ENCODE measurements at regions of chr22 and their contacts with region 1.

Region 1: DNA sequence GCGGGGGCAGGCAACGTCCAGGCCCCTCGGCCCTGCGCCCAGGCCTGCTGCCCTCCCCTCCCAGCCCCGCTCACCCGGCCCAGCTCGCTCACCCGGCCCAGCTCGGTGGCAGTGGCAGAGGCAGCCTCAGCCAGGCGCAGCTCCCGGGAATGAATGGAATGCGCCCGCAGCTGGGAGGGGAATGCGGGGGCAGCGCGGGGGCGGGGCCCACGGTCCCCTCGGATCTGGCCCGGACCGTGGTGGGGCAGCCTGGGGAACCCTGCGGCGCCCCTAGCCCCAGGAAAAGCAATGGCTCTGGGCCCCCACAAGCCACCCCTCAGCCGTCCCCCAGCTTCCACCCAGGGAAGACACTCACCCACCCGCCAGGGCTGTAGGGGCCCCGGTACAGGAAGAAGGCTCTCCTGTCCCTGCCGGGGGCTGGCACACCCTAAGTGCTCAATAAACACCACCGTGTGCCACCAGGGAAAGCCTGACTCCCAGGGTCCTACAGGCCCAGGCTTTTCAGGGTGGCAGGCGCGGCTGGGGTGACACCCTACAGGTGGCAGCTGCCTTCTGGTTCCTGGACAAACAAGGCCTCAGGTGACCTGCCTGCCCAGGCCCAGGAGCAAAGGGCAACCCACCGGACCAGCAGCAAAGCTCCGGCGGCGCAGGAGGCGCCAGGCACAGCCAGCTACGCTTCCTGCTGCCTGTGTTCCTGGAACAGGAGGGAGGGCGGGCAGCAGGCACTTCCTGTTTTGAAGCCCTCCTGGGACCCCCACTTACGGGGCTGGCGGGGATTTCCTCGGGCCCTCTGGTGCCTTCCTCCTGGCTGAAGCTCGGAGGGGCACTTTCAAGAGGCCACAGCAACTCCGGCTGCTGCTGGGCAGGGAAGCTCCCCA is 13.8 kb downstream of the PLXNB2 start:
- DNase-seq: peak; percentile 83
- H3K4me3 ChIP-seq: peak overlapping the region in 2 of 3 experiments; percentile 6 to 22
- H3K27ac ChIP-seq: peak overlapping the region; percentile 92
- H3K4me1 ChIP-seq: peaks cover 20% of the 10 kb centered on the region
- H3K27me3 ChIP-seq: no peaks in the 10 kb centered on the region
- CTCF ChIP-seq: peak in 1 of 2 donors; percentile 1
- POLR2A ChIP-seq: peak; percentile 9

Region 2: DNA sequence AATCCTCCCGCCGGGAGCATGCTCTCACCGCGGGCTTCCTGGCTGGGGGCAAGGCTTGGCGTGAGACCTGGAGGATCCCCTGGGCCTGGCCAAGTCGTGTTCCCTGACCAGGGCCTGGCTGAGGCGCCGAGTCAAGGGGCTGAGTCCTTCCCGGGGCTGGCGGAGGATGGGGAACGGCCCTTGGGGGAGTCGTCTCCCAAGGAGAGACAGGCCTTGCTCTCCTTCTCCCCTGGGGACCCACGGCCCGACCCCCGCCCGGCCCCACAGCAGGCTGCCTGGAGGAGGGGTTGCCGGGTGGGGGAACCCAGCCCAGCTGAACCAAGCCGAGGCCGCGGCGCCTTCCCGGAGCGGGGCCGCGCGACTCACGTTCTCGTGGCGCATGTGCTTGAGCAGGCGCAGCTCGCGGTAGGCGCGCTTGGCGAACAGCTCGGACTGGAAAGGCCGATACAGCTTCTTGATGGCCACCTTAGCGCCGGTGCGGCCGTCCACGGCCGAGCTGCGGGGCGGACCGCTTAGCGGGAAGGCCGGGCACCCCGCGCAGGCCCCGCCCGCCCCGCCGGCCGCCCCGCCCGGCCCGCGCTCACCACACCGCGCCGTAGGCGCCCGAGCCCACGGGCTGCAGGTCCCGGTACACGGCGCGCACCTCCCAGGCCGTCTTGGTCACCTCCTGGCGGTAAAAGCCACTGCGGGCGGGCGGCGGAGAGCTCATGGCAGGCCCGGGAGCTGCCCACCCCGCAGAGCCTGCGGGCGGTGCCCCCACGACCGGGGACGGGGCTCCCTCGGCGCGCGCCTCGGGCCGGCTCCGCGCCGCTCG is 32.7 kb before region 1 on chr22:
- CTCF ChIA-PET with region 1: no interaction called
- POLR2A ChIA-PET with region 1: no interaction called
- dilution Hi-C with region 1: no loop called
- intact Hi-C with region 1: no loop called
- DNase-seq: peak; percentile 54
- H3K4me3 ChIP-seq: peak overlapping the region; percentile 23 to 69 (median 49)
- H3K27ac ChIP-seq: peak overlapping the region; percentile 22
- H3K4me1 ChIP-seq: peaks cover 11% of the 10 kb centered on the region
- H3K27me3 ChIP-seq: no peaks in the 10 kb centered on the region
- CTCF ChIP-seq: no peak
- POLR2A ChIP-seq: no peak

Region 3: DNA sequence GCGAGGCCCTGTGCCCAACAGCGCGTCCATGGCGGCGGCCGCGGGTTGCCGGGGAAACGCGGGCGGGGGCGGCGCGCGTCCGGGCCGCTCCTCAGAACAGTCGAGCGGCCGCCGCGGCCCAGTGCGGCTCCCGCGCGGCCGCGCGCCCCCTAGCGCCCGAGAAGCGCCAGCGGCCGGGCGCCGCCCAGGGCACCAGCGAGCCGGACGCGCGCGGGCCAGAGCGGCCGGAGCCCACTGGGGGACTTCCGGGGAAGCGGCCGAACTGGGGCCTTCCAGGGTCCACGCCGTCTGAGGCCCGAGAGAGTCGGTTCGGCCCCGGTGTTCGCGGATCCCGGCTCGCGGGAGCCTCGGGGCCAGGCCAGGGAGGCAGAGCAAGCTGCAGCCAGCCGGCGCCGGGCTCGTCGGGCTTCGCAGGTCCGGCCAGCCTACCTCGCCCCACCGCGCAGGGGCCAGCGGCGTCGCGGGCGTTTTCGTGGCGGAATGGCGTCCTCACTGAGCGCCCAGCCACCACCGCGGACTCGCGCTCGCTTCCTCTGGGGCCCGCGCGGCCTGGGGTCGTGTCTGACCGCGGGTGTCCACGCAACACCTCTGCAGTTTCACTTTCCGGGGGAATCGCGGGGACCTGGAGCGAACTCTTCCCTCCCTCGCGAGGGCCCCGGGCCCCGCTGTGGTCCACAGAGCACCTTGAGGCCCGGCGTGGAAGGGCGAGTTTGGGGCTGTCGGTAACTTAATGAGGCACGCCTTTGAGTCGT is 33.5 kb after region 1 on chr22 and contains the start of gene DENND6B:
- CTCF ChIA-PET with region 1: interaction called, 29 read pairs
- POLR2A ChIA-PET with region 1: no interaction called
- dilution Hi-C with region 1: no loop called
- intact Hi-C with region 1: loop called (anchors 1 kb)
- DNase-seq: peak; percentile 64
- H3K4me3 ChIP-seq: peak within 1 kb of the TSS; percentile 16 to 58 (median 56)
- H3K27ac ChIP-seq: peak within 1 kb of the TSS; percentile 70
- H3K4me1 ChIP-seq: peaks cover 9% of the 10 kb centered on the region
- H3K27me3 ChIP-seq: no peaks in the 10 kb centered on the region
- CTCF ChIP-seq: peak; percentile 33 to 68
- POLR2A ChIP-seq: peak; percentile 89
- total RNA-seq, gene DENND6B: 2.9 and 5.9 TPM in 2 replicates

Region 4: DNA sequence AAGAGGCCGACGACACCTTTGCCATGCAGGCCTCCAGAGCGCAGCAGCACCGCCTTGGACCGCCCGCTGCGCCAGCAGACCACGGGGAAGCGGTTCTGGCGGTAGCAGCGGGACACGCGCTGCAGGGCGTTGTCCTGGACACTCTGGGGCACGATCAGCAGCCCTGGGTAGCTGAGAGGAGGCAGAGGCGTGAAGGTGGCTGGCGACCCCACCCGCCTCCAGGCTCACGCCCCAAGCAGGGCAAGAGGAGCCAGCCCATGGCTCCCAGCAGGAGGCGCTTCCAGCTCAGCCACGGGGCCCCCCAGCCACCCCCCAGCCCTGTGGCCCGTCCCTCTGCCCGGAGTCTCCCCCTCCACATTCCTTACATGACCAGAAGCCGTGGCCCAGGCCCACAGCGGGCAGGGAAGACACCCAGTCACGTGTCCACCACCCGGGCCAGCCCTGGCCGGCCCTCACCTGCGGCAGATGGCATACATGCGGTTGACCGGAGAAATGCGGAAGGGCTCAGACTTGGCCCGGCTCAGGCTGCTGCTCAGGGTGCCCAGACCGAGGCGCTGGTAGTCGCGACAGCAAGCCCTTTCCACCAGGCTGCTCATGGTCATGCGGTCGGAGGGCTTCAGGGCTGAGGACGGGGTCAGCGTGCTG is 165.9 kb after region 1 on chr22:
- CTCF ChIA-PET with region 1: no interaction called
- POLR2A ChIA-PET with region 1: no interaction called
- dilution Hi-C with region 1: no loop called
- intact Hi-C with region 1: no loop called
- DNase-seq: no peak
- H3K4me3 ChIP-seq: no peak overlapping the region
- H3K27ac ChIP-seq: no peak overlapping the region
- H3K4me1 ChIP-seq: no peaks in the 10 kb centered on the region
- H3K27me3 ChIP-seq: no peaks in the 10 kb centered on the region
- CTCF ChIP-seq: no peak
- POLR2A ChIP-seq: no peak